ENCODE measurements at regions of chr17 and their contacts with region 1.

Region 1: GRCh38 chr17:1724506-1725362 is at the start of gene WDR81:
- DNase-seq: peak; percentile 57 to 93
- H3K4me3 ChIP-seq: peak within 1 kb of the TSS; percentile 65 to 91
- H3K27ac ChIP-seq: peak within 1 kb of the TSS; percentile 82 to 84
- H3K4me1 ChIP-seq: peaks cover 8 to 18% of the 10 kb centered on the region in 2 donors
- H3K27me3 ChIP-seq: no peaks in the 10 kb centered on the region
- CTCF ChIP-seq: peak in 2 of 3 experiments; percentile 12 to 15
- total RNA-seq, gene WDR81: 70.4 TPM

Region 2: DNA sequence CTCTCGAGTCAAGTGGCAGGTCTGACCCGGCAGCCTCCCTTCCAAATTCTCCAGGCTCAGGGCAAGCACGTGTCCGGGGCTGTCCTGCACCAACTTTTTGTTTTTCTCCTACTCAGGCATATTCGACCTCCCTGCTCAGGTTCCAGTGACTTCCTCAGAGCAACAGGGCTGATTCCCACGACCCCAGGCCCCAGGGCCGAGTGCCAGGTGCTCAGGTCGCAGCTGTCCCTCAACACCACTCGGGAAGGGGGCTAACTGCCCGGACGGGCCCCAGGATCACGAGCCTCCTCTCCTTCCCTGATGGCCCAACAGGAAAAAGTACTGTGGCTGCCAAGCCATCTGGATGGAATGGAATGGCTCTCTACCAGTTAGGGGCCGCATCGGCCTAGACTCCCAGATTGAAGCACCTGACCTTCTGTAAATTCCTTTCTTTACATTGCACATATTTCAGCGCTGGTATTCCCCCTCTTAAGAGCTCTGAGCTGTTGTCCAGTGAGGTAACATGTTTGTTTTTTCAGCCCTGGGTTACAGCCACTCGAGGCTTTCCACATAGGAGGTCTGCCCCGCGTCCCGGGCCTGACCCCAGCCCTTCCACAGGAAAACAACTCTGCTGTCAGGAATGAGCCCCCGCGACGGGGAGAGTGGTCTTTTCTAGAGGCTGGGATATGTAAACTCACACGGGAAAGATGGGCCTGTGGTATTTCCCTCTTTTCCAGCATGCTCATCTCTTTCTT is 770.1 kb before region 1 on chr17:
- intact Hi-C with region 1: no loop called
- DNase-seq: no peak
- H3K4me3 ChIP-seq: no peak overlapping the region
- H3K27ac ChIP-seq: peak overlapping the region in 1 of 2 donors; percentile 54
- H3K4me1 ChIP-seq: peaks cover 3 to 16% of the 10 kb centered on the region in 2 donors
- H3K27me3 ChIP-seq: no peaks in the 10 kb centered on the region
- CTCF ChIP-seq: no peak

Region 3: DNA sequence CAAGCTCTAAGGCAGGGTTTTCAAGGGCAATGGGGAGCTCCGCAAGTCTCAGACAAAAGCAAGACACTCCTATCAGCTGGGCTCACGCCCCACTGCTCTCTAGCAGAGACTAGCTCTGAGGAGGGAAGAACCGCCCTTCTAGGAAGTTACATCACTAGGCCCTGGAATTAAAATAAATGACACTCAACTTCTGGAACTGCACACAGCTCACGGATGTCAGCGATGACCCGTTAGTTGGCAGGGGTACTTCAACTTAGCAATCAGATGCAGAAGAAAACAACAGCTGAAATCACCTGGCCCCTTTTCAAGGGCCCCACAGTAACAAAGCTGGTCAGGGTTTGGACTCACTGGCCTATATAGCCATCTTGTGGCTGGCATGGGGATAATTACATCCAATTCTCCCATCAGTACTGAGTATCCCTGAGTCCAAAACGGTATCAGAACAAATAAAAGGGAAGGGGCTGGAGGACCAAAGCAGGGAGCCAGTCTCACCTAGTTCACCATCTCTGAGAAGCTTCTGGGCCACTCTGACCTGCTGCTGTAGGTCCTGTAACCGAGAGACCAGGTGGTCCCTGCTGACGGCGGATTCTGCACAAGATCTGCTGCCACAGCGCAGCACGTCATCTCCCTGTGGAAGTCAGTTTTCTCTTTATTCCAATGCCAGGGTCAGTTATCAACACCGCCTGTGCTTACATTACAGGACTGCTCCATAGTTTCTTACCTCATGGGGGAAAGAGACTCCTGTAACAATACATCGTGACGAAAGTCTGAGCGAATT is 59.3 kb after region 1 on chr17:
- intact Hi-C with region 1: loop called (anchors 1 kb)
- DNase-seq: peak; percentile 65 to 94
- H3K4me3 ChIP-seq: peak overlapping the region in 1 of 2 donors; percentile 20
- H3K27ac ChIP-seq: peak overlapping the region; percentile 87 to 94
- H3K4me1 ChIP-seq: peaks cover 4 to 51% of the 10 kb centered on the region in 2 donors
- H3K27me3 ChIP-seq: no peaks in the 10 kb centered on the region
- CTCF ChIP-seq: peak; percentile 58 to 63 (median 61)

Region 4: DNA sequence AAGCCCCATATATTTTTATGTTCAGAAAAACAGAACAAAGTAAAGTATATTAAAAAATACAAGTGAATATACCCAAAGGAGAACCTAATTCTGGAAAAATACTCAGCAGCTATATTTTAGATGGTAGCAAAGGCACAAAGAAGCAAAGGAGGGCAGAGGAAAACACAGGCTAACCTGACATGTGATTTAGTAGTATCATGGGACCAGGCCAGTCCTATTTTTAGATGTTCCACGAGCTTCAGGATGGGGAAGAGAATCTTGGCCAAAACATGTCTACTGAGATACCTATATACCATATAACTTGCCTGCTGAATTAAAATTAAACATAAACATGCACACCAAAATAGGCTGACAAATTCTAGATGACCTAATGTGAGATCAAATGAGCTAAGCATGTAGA is 72.1 kb after region 1 on chr17:
- intact Hi-C with region 1: no loop called
- DNase-seq: peak in 1 of 2 donors; percentile 57
- H3K4me3 ChIP-seq: no peak overlapping the region
- H3K27ac ChIP-seq: peak overlapping the region; percentile 55 to 72
- H3K4me1 ChIP-seq: no peaks in the 10 kb centered on the region
- H3K27me3 ChIP-seq: no peaks in the 10 kb centered on the region
- CTCF ChIP-seq: no peak

Region 5: GRCh38 chr17:1829592-1830257 is 105.0 kb after region 1 on chr17 and contains the starts of genes RPA1 and SMYD4:
- intact Hi-C with region 1: loop called (anchors 2 kb)
- DNase-seq: peak; percentile 47 to 91
- H3K4me3 ChIP-seq: peak within 1 kb of the TSS; percentile 90 to 95
- H3K27ac ChIP-seq: peak within 1 kb of the TSS; percentile 80 to 81
- H3K4me1 ChIP-seq: peaks cover 0 to 8% of the 10 kb centered on the region in 2 donors
- H3K27me3 ChIP-seq: no peaks in the 10 kb centered on the region
- CTCF ChIP-seq: no peak
- total RNA-seq, gene RPA1: 34.0 TPM
- total RNA-seq, gene SMYD4: 7.6 TPM

Region 6: GRCh38 chr17:1865252-1866037 is 140.7 kb after region 1 on chr17:
- intact Hi-C with region 1: loop called (anchors 2 kb)
- DNase-seq: no peak
- H3K4me3 ChIP-seq: no peak overlapping the region
- H3K27ac ChIP-seq: no peak overlapping the region
- H3K4me1 ChIP-seq: no peaks in the 10 kb centered on the region
- H3K27me3 ChIP-seq: no peaks in the 10 kb centered on the region
- CTCF ChIP-seq: peak; percentile 45 to 57 (median 46)